Transverse colon (tissue), 4 donors: ENCODE measurements at regions of chr2 and their contacts with region 1.

Region 1: DNA sequence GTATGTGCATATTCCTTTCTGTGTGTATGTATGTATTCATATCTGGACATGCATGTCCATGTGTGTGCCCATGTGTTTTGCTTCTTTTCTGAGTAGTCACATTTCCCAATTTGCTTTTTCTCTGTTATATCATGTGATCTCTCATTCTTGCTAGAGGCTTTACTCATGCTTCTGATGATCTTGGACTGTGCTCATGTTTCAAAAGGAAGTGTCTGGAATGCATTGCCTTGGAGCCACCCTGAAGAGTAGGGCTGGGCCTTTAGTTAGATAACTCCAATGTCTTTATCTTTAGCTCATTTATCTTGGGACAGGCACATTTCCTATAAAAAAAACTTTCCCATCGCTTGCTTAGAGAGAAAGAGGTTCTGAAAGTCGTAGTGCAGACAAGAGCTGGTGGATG is 859.2 kb downstream of the CNTNAP5 start:
- DNase-seq: no peak
- H3K4me3 ChIP-seq: no peak overlapping the region
- H3K27ac ChIP-seq: no peak overlapping the region
- H3K4me1 ChIP-seq: no peaks in the 10 kb centered on the region
- H3K27me3 ChIP-seq: no peaks in the 10 kb centered on the region
- CTCF ChIP-seq: no peak
- EP300 ChIP-seq: no peak
- POLR2A ChIP-seq: no peak

Region 2: DNA sequence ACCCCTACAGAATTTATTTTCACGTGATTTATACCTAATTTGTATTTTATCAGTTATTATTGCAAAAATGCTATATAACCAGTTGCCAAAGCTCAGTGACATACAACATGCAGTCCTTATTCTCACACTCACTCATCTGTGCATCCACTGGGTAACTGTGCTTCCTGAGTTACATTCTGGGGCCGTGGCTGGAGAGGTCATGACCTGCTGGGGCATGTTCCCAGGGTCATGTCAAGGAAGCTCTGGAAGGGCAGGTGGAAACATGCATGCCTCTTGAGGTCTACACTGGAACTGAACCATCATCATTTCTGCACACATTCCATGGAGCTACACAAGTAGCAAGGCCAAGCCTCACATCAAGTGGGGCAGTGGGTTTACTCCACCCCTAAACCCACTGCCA is 143.7 kb before region 1 on chr2:
- in situ Hi-C with region 1: no loop called
- intact Hi-C with region 1: no loop called
- DNase-seq: no peak
- H3K4me3 ChIP-seq: no peak overlapping the region
- H3K27ac ChIP-seq: no peak overlapping the region
- H3K4me1 ChIP-seq: no peaks in the 10 kb centered on the region
- H3K27me3 ChIP-seq: no peaks in the 10 kb centered on the region
- CTCF ChIP-seq: no peak
- EP300 ChIP-seq: no peak
- POLR2A ChIP-seq: no peak

Region 3: GRCh38 chr2:124874219-124874618 is 10.1 kb before region 1 on chr2:
- in situ Hi-C with region 1: no loop called
- intact Hi-C with region 1: loop called (anchors 1 kb)
- DNase-seq: no peak
- H3K4me3 ChIP-seq: no peak overlapping the region
- H3K27ac ChIP-seq: no peak overlapping the region
- H3K4me1 ChIP-seq: no peaks in the 10 kb centered on the region
- H3K27me3 ChIP-seq: no peaks in the 10 kb centered on the region
- CTCF ChIP-seq: no peak
- EP300 ChIP-seq: no peak
- POLR2A ChIP-seq: no peak